ENCODE measurements at regions of chr9 and their contacts with region 1.

Region 1: DNA sequence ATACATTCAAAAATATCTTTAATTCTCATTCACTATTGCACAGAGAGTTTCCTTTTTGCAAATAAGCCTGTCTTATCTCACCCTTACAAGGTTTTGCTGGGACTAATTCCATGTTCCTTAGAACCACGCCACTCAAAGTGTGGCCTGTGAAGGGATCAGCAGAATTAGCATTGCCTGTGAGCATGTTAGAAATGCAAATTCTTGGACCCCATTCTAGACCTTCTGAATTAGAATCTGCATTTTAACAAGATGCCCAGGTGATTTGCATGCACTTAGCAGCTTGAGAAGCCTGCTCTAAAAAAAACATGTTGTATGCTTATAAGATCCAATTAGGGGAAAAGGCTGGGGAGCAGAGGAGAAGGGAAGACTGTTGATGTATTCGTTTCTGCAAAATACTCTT is 460.0 kb downstream of the NTRK2 start:
- DNase-seq: no peak
- H3K4me3 ChIP-seq: no peak overlapping the region
- H3K27ac ChIP-seq: no peak overlapping the region
- H3K4me1 ChIP-seq: no peaks in the 10 kb centered on the region
- H3K27me3 ChIP-seq: peaks cover 5% of the 10 kb centered on the region
- CTCF ChIP-seq: no peak

Region 2: DNA sequence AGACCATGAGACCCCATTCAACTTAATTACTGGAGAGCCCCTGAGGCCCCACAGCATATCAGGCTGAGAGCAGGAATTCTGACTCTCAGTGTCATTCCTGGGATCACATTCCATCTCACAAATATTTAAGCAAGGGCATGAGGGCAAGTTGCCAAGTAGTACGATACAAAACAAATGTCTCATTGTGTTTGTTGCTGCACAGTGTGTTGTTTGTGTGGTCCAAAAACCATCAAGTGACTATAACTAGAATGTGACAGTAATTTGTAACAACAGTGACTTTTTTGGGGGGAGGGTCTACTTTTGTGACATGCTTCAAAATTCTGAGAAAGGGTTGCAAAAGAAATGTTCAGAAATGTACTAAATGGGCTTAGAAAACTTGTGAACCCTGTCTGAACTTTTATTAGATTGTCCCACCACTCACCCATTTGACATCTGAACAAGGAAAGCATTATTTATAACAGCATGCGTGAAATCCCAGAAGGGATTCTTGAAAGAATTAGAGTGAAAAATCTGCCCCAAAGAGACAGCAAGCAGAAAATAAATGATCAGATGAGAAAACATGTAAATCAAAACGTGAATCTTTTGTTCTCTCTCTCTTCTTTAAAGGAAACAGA is 113.0 kb before region 1 on chr9:
- CTCF ChIA-PET with region 1: no interaction called
- dilution Hi-C with region 1: no loop called
- in situ Hi-C with region 1: no loop called
- intact Hi-C with region 1: no loop called
- DNase-seq: no peak
- H3K4me3 ChIP-seq: no peak overlapping the region
- H3K27ac ChIP-seq: no peak overlapping the region
- H3K4me1 ChIP-seq: peaks cover 14% of the 10 kb centered on the region
- H3K27me3 ChIP-seq: no peaks in the 10 kb centered on the region
- CTCF ChIP-seq: no peak

Region 3: GRCh38 chr9:85172001-85172978 is 42.8 kb after region 1 on chr9:
- CTCF ChIA-PET with region 1: no interaction called
- dilution Hi-C with region 1: loop called (anchors 5 kb)
- in situ Hi-C with region 1: no loop called
- intact Hi-C with region 1: no loop called
- DNase-seq: peak; percentile 93
- H3K4me3 ChIP-seq: no peak overlapping the region
- H3K27ac ChIP-seq: peak overlapping the region; percentile 9
- H3K4me1 ChIP-seq: peaks cover 22% of the 10 kb centered on the region
- H3K27me3 ChIP-seq: no peaks in the 10 kb centered on the region
- CTCF ChIP-seq: peak in 1 of 2 donors; percentile 13

Region 4: GRCh38 chr9:85200726-85201404 is 71.4 kb after region 1 on chr9:
- CTCF ChIA-PET with region 1: no interaction called
- dilution Hi-C with region 1: no loop called
- in situ Hi-C with region 1: no loop called
- intact Hi-C with region 1: no loop called
- DNase-seq: peak; percentile 73
- H3K4me3 ChIP-seq: no peak overlapping the region
- H3K27ac ChIP-seq: peak overlapping the region; percentile 32
- H3K4me1 ChIP-seq: peaks cover 24% of the 10 kb centered on the region
- H3K27me3 ChIP-seq: no peaks in the 10 kb centered on the region
- CTCF ChIP-seq: no peak

Measured in mammary epithelial cell (primary cell).